ENCODE measurements at regions of chr5 and their contacts with region 1.

Region 1: DNA sequence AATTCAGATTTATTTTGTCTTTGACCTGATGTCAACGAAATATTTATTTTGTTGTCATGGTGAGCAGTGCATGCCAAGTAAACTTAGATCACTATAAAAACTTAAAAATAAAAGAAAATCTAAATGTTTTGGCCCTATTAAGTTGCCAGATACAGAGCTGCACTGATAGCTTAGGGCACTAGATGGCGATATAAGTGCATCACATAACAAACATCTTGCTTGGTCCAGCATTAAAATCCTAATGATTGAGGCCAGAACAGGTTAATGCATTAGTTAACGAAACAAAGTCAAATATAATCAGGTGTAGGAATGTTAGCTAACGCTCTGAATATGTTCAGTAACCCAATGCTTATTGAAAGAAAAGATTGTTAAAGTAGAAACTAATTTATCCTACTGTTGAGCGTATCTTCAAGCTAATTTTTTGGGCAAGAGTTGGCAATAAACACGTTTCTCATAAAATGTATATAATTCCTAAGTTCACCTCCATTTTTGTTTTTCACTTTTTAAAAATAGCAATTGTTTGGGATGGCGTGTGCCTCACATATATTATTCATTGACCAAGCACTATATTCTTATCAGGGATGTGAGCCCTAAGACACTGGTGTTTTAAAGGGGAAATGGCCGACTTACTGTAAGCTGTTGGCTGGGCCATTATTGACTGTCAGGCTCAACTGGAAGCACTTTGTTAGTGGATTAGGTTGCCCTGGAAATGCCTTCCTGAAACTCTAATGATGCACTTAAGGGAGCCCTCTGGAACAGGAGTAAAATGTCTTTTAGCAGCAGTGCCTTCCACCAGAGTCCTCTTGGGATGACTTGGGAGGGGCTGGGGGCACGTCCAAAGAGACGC is 33.3 kb downstream of the KCTD16 start:
- DNase-seq: peak; percentile 57
- ATAC-seq: peak; percentile 94
- H3K4me3 ChIP-seq: no peak overlapping the region
- H3K27ac ChIP-seq: no peak overlapping the region
- H3K4me1 ChIP-seq: no peaks in the 10 kb centered on the region
- H3K27me3 ChIP-seq: peaks cover 64% of the 10 kb centered on the region
- CTCF ChIP-seq: peak; percentile 57 to 87 (median 70); a peak in 5 of 6 replicates
- POLR2A ChIP-seq: no peak
- RAD21 ChIP-seq: peak; percentile 87

Region 2: GRCh38 chr5:143074414-143074996 is 1129.5 kb before region 1 on chr5:
- CTCF ChIA-PET with region 1: no interaction called
- POLR2A ChIA-PET with region 1: no interaction called
- RAD21 ChIA-PET with region 1: no interaction called
- intact Hi-C with region 1: no loop called
- DNase-seq: no peak
- ATAC-seq: no peak
- H3K4me3 ChIP-seq: no peak overlapping the region
- H3K27ac ChIP-seq: no peak overlapping the region
- H3K4me1 ChIP-seq: no peaks in the 10 kb centered on the region
- H3K27me3 ChIP-seq: no peaks in the 10 kb centered on the region
- CTCF ChIP-seq: no peak
- POLR2A ChIP-seq: no peak
- RAD21 ChIP-seq: no peak

Region 3: DNA sequence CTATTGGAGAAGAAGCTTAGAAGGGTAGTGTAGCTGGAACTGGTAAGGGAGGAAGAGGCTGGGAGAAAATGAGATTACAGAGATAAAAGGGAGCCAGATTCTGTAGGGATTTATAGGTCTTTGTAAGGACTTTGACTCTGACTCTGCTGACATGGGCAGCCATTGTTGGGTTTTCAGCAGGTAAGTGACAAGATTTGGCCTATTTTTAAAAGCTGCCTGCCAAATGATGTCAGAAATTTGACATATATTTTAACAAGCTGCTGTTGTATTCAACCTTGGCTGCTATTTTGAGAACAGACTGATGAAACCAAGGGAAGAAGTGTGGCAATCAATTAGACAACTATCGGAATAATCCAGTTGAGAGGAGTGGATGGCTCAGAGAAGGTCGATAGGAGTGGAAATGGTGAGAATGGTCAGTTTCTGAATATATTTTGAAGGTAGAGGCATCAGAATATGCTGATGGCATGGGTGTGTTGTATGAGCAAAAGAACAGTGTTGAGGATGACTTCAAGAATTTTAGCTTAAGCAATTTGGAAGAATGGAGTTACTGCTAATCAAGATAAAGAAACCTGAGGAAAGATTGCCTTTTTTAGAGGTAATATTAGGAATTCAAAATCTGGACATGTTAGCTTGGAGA is 23.5 kb after region 1 on chr5:
- CTCF ChIA-PET with region 1: no interaction called
- POLR2A ChIA-PET with region 1: no interaction called
- RAD21 ChIA-PET with region 1: no interaction called
- intact Hi-C with region 1: no loop called
- DNase-seq: no peak
- ATAC-seq: no peak
- H3K4me3 ChIP-seq: no peak overlapping the region
- H3K27ac ChIP-seq: no peak overlapping the region
- H3K4me1 ChIP-seq: no peaks in the 10 kb centered on the region
- H3K27me3 ChIP-seq: peaks cover 60% of the 10 kb centered on the region
- CTCF ChIP-seq: no peak
- POLR2A ChIP-seq: no peak
- RAD21 ChIP-seq: no peak

Region 4: GRCh38 chr5:144284931-144285502 is 81.0 kb after region 1 on chr5:
- CTCF ChIA-PET with region 1: no interaction called
- POLR2A ChIA-PET with region 1: no interaction called
- RAD21 ChIA-PET with region 1: no interaction called
- intact Hi-C with region 1: no loop called
- DNase-seq: no peak
- ATAC-seq: no peak
- H3K4me3 ChIP-seq: no peak overlapping the region
- H3K27ac ChIP-seq: no peak overlapping the region
- H3K4me1 ChIP-seq: no peaks in the 10 kb centered on the region
- H3K27me3 ChIP-seq: peaks cover 14% of the 10 kb centered on the region
- CTCF ChIP-seq: no peak
- POLR2A ChIP-seq: no peak
- RAD21 ChIP-seq: no peak

Region 5: GRCh38 chr5:144390133-144390532 is 186.2 kb after region 1 on chr5:
- CTCF ChIA-PET with region 1: interaction called, 3 read pairs
- POLR2A ChIA-PET with region 1: no interaction called
- RAD21 ChIA-PET with region 1: no interaction called
- intact Hi-C with region 1: loop called (anchors 5 kb)
- DNase-seq: no peak
- ATAC-seq: peak; percentile 61; the same call in 1 of the 2 replicates
- H3K4me3 ChIP-seq: no peak overlapping the region
- H3K27ac ChIP-seq: no peak overlapping the region
- H3K4me1 ChIP-seq: no peaks in the 10 kb centered on the region
- H3K27me3 ChIP-seq: 0 out of 2 replicates have a peak, but pooled peaks cover 4% of the 10 kb centered on the region
- CTCF ChIP-seq: peak; percentile 18 to 45 (median 42); a peak in 4 of 6 replicates
- POLR2A ChIP-seq: no peak
- RAD21 ChIP-seq: peak; percentile 42

Region 6: DNA sequence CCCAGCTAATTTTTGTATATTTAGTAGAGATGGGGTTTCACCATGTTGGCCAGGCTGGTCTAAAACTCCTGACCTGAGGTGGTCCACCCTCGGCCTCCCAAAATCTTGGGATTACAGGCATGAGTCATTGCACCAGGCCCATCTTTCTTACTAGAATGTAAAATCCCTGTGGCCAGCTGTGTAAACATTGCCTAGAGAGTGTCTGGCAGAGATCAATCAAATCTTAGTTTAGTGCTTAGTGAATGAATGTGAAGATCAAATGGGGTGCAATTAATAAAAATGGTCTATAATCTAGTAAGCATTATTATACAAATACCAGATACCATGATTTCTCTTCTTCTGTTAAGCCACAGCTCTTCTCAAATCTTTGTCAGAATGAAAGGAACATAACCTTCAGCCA is 256.6 kb after region 1 on chr5:
- CTCF ChIA-PET with region 1: no interaction called
- POLR2A ChIA-PET with region 1: no interaction called
- RAD21 ChIA-PET with region 1: no interaction called
- intact Hi-C with region 1: no loop called
- DNase-seq: no peak
- ATAC-seq: no peak
- H3K4me3 ChIP-seq: no peak overlapping the region
- H3K27ac ChIP-seq: no peak overlapping the region
- H3K4me1 ChIP-seq: no peaks in the 10 kb centered on the region
- H3K27me3 ChIP-seq: no peaks in the 10 kb centered on the region
- CTCF ChIP-seq: no peak
- POLR2A ChIP-seq: no peak
- RAD21 ChIP-seq: no peak

Region 7: GRCh38 chr5:145237843-145238242 is 1033.9 kb after region 1 on chr5:
- CTCF ChIA-PET with region 1: interaction called, 15 read pairs
- POLR2A ChIA-PET with region 1: no interaction called
- RAD21 ChIA-PET with region 1: no interaction called
- intact Hi-C with region 1: loop called (anchors 2 kb)
- DNase-seq: peak; percentile 69
- ATAC-seq: peak; percentile 99
- H3K4me3 ChIP-seq: no peak overlapping the region
- H3K27ac ChIP-seq: no peak overlapping the region
- H3K4me1 ChIP-seq: no peaks in the 10 kb centered on the region
- H3K27me3 ChIP-seq: no peaks in the 10 kb centered on the region
- CTCF ChIP-seq: peak; percentile 52 to 90 (median 75); a peak in 5 of 6 replicates
- POLR2A ChIP-seq: no peak
- RAD21 ChIP-seq: peak; percentile 80

Region 8: GRCh38 chr5:145681686-145682085 is 1477.7 kb after region 1 on chr5:
- CTCF ChIA-PET with region 1: no interaction called
- POLR2A ChIA-PET with region 1: no interaction called
- RAD21 ChIA-PET with region 1: no interaction called
- intact Hi-C with region 1: loop called (anchors 10 kb)
- DNase-seq: peak; percentile 75
- ATAC-seq: peak; percentile 99
- H3K4me3 ChIP-seq: no peak overlapping the region
- H3K27ac ChIP-seq: no peak overlapping the region
- H3K4me1 ChIP-seq: no peaks in the 10 kb centered on the region; a peak in 1 of 4 replicates
- H3K27me3 ChIP-seq: no peaks in the 10 kb centered on the region
- CTCF ChIP-seq: peak; percentile 81 to 93 (median 91)
- POLR2A ChIP-seq: no peak
- RAD21 ChIP-seq: peak; percentile 79

Region 9: GRCh38 chr5:145825751-145826180 is 1621.8 kb after region 1 on chr5:
- CTCF ChIA-PET with region 1: interaction called, 6 read pairs
- POLR2A ChIA-PET with region 1: no interaction called
- RAD21 ChIA-PET with region 1: no interaction called
- intact Hi-C with region 1: loop called (anchors 5 kb)
- DNase-seq: peak; percentile 39
- ATAC-seq: peak; percentile 78
- H3K4me3 ChIP-seq: no peak overlapping the region
- H3K27ac ChIP-seq: no peak overlapping the region
- H3K4me1 ChIP-seq: peaks cover 7 to 10% of the 10 kb centered on the region in 2 experiments
- H3K27me3 ChIP-seq: no peaks in the 10 kb centered on the region
- CTCF ChIP-seq: peak; percentile 69 to 98 (median 89)
- POLR2A ChIP-seq: no peak
- RAD21 ChIP-seq: peak; percentile 73

Region 10: GRCh38 chr5:145887976-145888574 is 1684.1 kb after region 1 on chr5:
- CTCF ChIA-PET with region 1: interaction called, 3 read pairs
- POLR2A ChIA-PET with region 1: no interaction called
- RAD21 ChIA-PET with region 1: interaction called in 1 of 2 experiments, 3 read pairs
- intact Hi-C with region 1: loop called (anchors 5 kb)
- DNase-seq: peak; percentile 60
- ATAC-seq: peak; percentile 99
- H3K4me3 ChIP-seq: no peak overlapping the region
- H3K27ac ChIP-seq: no peak overlapping the region
- H3K4me1 ChIP-seq: no peaks in the 10 kb centered on the region
- H3K27me3 ChIP-seq: no peaks in the 10 kb centered on the region
- CTCF ChIP-seq: peak; percentile 78 to 96 (median 80)
- POLR2A ChIP-seq: no peak
- RAD21 ChIP-seq: peak; percentile 86

Region 11: GRCh38 chr5:146130440-146131045 is 1926.6 kb after region 1 on chr5:
- CTCF ChIA-PET with region 1: interaction called, 8 read pairs
- POLR2A ChIA-PET with region 1: no interaction called
- RAD21 ChIA-PET with region 1: no interaction called
- intact Hi-C with region 1: loop called (anchors 5 kb)
- DNase-seq: no peak
- ATAC-seq: no peak
- H3K4me3 ChIP-seq: no peak overlapping the region
- H3K27ac ChIP-seq: no peak overlapping the region
- H3K4me1 ChIP-seq: no peaks in the 10 kb centered on the region
- H3K27me3 ChIP-seq: no peaks in the 10 kb centered on the region
- CTCF ChIP-seq: peak; percentile 30 to 74 (median 48); a peak in 4 of 6 replicates
- POLR2A ChIP-seq: no peak
- RAD21 ChIP-seq: peak; percentile 58

Measured in HCT116 (cell line).